ENCODE measurements at regions of chr6 and their contacts with region 1.

Region 1: DNA sequence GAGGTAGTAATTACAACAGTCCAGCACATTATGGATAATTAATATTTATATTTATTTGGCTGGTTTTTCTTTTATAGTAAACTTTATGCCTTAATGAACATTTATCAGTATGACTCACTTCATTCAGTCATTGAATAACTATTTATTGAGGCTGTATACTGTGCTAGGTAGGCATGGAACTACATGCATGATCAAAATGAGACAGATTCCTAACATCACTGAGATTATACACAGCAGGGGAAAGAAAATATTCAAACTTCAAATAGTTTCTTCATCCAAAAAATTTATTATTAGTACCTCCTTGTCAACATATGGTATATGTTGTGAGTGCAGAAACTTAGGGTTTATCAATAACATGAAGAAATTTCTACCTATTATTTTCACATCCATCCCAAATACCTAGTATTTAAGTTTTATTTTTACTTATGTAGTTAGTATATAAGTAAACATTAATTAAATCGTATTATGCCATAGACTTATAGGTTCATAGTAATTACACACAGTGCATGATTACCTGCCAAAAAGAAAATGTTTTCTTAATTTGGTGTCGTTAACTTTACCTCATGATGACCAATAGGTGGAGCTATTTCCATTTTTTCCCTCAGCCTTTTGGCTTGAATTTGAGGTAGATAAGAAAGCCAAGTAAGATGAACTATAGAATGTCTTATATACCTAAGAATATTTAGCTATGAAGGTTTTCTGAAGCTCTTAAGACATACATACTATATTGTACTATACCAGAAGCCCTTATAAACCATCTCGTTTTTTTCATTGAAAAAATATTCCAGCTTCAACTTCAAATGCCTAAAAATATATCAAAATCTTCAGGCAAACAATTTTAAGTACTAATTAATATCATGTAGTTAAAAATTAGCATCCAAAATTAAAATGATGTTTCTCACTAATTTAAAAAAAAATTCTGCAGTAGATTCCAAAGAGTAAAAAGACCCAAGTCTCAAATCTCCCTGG is 12.5 kb upstream of the TMEM30A start:
- DNase-seq: peak; percentile 24
- H3K4me3 ChIP-seq: no peak overlapping the region
- CTCF ChIP-seq: peak; percentile 35

Region 2: GRCh38 chr6:75284632-75285286 is 12.3 kb before region 1 on chr6 and contains the start of gene TMEM30A:
- CTCF ChIA-PET with region 1: interaction called, 18 read pairs
- POLR2A ChIA-PET with region 1: interaction called, 3 read pairs
- DNase-seq: peak; percentile 95
- H3K4me3 ChIP-seq: peak within 1 kb of the TSS; percentile 84
- CTCF ChIP-seq: peak; percentile 17

Region 3: GRCh38 chr6:75317503-75318206 is 20.6 kb after region 1 on chr6:
- CTCF ChIA-PET with region 1: interaction called, 17 read pairs
- POLR2A ChIA-PET with region 1: no interaction called
- DNase-seq: peak; percentile 56
- H3K4me3 ChIP-seq: no peak overlapping the region
- CTCF ChIP-seq: no peak

Region 4: GRCh38 chr6:75504465-75505228 is 207.6 kb after region 1 on chr6:
- CTCF ChIA-PET with region 1: interaction called, 14 read pairs
- POLR2A ChIA-PET with region 1: no interaction called
- DNase-seq: no peak
- H3K4me3 ChIP-seq: no peak overlapping the region
- CTCF ChIP-seq: peak; percentile 16

Region 5: GRCh38 chr6:75526502-75527127 is 229.5 kb after region 1 on chr6:
- CTCF ChIA-PET with region 1: interaction called, 152 read pairs
- POLR2A ChIA-PET with region 1: no interaction called
- DNase-seq: no peak
- H3K4me3 ChIP-seq: no peak overlapping the region
- CTCF ChIP-seq: peak; percentile 44

Region 6: GRCh38 chr6:75546381-75546780 is 249.3 kb after region 1 on chr6:
- CTCF ChIA-PET with region 1: interaction called, 15 read pairs
- POLR2A ChIA-PET with region 1: no interaction called
- DNase-seq: no peak
- H3K4me3 ChIP-seq: no peak overlapping the region
- CTCF ChIP-seq: no peak

Region 7: DNA sequence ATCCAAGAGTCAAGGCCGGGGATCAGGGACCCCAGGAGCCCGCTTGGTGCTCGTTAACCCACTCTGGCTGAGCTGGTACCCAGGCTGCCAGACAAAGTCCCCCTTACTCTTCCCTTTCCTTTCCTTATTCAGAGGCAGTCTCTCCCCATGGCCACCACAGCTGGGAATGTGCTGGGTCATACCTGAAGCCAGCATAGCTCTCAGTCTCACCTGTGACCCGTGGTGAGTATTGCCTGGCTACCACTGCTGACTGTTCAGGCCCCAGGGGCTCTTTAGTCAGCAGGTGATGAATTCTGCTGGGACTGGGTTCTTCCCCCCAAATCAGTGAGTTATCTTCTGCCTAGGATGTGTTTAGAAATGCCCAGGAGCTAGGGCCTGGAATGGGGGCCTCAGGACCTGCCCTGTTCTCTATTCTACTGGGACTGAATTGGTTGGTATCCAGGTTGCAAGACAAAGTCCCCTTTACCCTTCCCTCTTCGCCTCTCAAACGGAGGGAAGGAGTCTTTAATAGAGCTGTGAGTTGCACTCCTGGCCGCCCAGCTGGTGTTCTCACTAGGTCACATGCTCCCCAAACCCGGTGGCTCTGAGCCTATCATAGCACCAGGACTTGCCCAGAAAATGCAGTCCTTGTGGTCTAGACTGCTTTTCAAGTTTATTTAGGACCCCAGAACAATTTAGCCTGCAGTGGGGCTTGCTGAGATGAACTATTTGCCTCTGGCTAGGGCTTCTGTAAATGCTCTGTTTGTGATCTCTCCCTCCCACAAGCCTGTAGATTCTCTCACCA is 516.6 kb after region 1 on chr6:
- CTCF ChIA-PET with region 1: no interaction called
- POLR2A ChIA-PET with region 1: no interaction called
- DNase-seq: no peak
- H3K4me3 ChIP-seq: no peak overlapping the region
- CTCF ChIP-seq: no peak